HepG2 (cell line): ENCODE measurements at regions of chr9 and their contacts with region 1.

Region 1: GRCh38 chr9:132694157-132694556 is 23.9 kb downstream of the GTF3C4 start:
- DNase-seq: no peak
- ATAC-seq: no peak; the same call in 2 of the 3 replicates
- H3K4me3 ChIP-seq: no peak overlapping the region
- H3K27ac ChIP-seq: no peak overlapping the region
- H3K4me1 ChIP-seq: no peaks in the 10 kb centered on the region
- H3K27me3 ChIP-seq: no peaks in the 10 kb centered on the region; a peak in 1 of 5 replicates
- CTCF ChIP-seq: peak; percentile 51
- EP300 ChIP-seq: no peak
- POLR2A ChIP-seq: no peak
- RAD21 ChIP-seq: no peak

Region 2: GRCh38 chr9:132762896-132763295 is 68.7 kb after region 1 on chr9:
- CTCF ChIA-PET with region 1: no interaction called
- POLR2A ChIA-PET with region 1: no interaction called
- in situ Hi-C with region 1: no loop called
- intact Hi-C with region 1: no loop called
- DNase-seq: no peak
- ATAC-seq: no peak
- H3K4me3 ChIP-seq: no peak overlapping the region
- H3K27ac ChIP-seq: no peak overlapping the region
- H3K4me1 ChIP-seq: no peaks in the 10 kb centered on the region
- H3K27me3 ChIP-seq: 0 out of 5 replicates have a peak, but pooled peaks cover 0 to under 1% of the 10 kb centered on the region in 2 experiments
- CTCF ChIP-seq: no peak
- EP300 ChIP-seq: no peak
- POLR2A ChIP-seq: no peak
- RAD21 ChIP-seq: no peak

Region 3: DNA sequence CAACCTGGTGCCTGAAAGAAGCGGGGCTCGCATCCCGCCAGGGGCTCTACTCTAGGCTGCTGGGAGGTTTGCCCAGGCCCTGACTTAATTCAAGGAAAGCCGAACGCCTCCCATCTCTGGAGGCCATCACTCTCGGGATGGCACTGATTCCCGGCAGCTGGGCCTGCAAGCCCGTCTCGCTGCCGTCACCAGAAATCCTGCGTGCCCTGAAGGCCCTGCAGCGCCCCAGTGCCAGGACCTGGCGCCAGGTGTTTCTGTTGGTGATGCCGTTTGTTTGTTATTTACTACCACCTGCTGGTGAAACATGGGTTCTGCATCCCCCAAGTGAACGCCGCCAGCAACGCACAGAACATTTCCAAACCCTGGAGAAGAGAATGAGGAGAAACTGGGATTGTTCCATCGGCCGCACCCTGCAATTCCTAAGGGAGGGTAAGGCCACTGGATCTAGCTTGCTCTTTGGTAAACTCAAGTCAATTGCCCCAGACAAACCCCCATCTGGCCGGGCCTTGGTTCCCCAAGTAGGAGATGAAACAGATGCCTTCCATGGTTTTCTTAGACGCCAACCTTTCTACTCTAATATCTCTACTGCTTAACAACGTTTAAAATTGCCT is 106.0 kb after region 1 on chr9:
- CTCF ChIA-PET with region 1: interaction called, 8 read pairs
- POLR2A ChIA-PET with region 1: no interaction called
- in situ Hi-C with region 1: loop called (anchors 10 kb)
- intact Hi-C with region 1: loop called (anchors 1 kb)
- DNase-seq: peak; percentile 54
- ATAC-seq: peak; percentile 74
- H3K4me3 ChIP-seq: no peak overlapping the region
- H3K27ac ChIP-seq: no peak overlapping the region
- H3K4me1 ChIP-seq: peaks cover 19% of the 10 kb centered on the region
- H3K27me3 ChIP-seq: peaks cover 4 to 40% of the 10 kb centered on the region in 2 experiments; a peak in 4 of 5 replicates
- CTCF ChIP-seq: peak; percentile 90
- EP300 ChIP-seq: no peak
- POLR2A ChIP-seq: no peak
- RAD21 ChIP-seq: peak; percentile 89